Caco-2 (cell line): ENCODE measurements at regions of chr10 and their contacts with region 1.

Region 1: DNA sequence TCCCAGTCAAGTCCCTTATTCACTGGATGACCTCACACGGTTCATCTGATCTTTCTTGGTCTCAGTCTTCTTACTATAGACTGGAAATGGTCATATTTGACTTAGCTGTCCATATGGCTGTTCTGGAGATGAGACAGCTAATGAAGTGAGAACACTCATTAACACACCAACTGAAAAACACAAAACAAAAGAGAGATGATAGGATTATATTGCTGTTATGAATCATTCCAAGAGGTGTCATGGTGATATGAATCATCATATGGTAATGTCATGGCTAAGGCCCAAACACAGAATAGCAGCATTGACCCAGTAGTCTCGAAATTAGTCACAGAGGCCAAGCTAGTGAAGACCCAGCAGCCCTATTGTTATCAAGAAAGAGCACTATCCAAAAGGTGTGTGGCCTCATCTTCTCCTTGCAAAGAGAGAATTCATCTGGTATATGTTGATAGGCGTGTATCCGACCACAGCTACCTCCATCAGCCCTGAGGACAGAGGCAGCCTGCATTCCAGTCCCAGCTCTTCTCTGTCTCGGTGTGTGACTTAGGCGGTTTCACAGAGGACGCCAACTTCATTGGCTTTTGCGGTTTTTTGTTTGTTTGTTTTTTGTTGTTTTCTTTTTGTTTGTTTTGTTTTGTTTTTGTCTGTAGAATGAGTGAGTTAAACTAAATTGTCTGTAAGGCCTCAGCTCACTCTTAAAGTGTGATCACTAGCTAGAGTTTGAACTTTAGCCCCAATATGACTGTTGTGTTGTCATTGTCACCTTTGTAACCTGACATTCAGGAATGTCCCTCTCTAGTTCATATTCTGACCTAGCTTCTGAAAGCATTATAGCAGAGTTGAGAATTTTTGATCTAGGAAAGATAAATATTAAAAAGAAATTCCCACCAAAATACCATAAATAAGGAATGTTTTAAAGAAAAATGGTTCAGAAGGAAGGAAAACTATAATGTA is 97.4 kb upstream of the PDCD4 start:
- DNase-seq: peak in 1 of 2 experiments; percentile 35
- H3K4me3 ChIP-seq: no peak overlapping the region
- H3K4me3 Mint-ChIP-seq: peak overlapping the region; percentile 51
- H3K27ac Mint-ChIP-seq: peak overlapping the region; percentile 98
- H3K4me1 ChIP-seq: peaks cover 34% of the 10 kb centered on the region
- H3K4me1 Mint-ChIP-seq: peaks cover 21% of the 10 kb centered on the region
- H3K27me3 ChIP-seq: no peaks in the 10 kb centered on the region
- H3K27me3 Mint-ChIP-seq: no peaks in the 10 kb centered on the region
- CTCF ChIP-seq: no peak

Region 2: DNA sequence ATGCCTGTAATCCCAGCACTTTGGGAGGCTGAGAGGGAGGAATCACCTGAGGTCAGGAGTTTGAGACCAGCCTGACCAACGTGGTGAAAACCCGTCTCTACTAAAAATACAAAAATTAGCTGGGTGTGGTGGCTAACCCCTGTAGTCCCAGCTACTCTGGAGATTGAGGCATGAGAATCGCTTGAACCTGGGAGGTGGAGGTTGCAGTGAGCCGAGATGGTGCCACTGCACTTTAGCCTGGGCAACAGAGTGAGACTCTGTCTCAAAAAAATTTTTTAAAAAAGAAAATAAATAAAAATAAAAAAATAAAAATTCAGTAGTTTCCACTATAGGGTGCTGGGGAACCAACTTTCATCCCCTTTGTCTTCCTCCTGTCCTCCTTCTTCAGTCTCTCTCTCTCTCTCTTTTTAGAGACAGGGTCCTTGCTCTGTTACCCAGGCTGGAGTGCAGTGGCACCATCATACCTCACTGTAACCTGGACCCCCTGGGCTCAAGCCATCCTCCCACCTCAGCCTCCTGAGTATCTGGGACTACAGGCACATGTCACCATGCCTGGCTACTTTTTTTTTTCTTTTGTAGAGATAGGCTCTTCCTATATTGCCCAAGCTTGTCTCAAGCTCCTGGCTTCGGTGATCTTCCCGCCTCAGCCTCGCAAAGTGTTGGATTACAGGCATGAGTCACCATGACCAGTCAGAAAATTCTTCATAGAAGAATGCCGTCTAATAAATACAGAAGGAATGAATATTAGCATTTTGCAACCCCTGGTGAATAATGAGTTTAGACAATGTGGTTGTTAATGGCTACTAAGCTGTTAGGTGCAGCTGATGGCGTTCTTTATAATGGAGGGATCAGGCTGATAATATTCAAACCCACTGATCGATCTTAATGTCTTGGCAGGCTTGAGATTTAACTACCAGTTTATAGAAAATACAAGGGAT is 109.6 kb before region 1 on chr10:
- CTCF ChIA-PET with region 1: no interaction called
- POLR2A ChIA-PET with region 1: no interaction called
- intact Hi-C with region 1: no loop called
- DNase-seq: peak; percentile 46 to 47
- H3K4me3 ChIP-seq: no peak overlapping the region
- H3K4me3 Mint-ChIP-seq: no peak overlapping the region
- H3K27ac Mint-ChIP-seq: no peak overlapping the region
- H3K4me1 ChIP-seq: no peaks in the 10 kb centered on the region
- H3K4me1 Mint-ChIP-seq: no peaks in the 10 kb centered on the region
- H3K27me3 ChIP-seq: no peaks in the 10 kb centered on the region
- H3K27me3 Mint-ChIP-seq: peaks cover 3% of the 10 kb centered on the region
- CTCF ChIP-seq: no peak

Region 3: GRCh38 chr10:110794808-110795207 is 20.5 kb after region 1 on chr10:
- CTCF ChIA-PET with region 1: no interaction called
- POLR2A ChIA-PET with region 1: no interaction called
- intact Hi-C with region 1: loop called (anchors 1 kb)
- DNase-seq: no peak
- H3K4me3 ChIP-seq: no peak overlapping the region
- H3K4me3 Mint-ChIP-seq: no peak overlapping the region
- H3K27ac Mint-ChIP-seq: no peak overlapping the region
- H3K4me1 ChIP-seq: peaks cover 18% of the 10 kb centered on the region
- H3K4me1 Mint-ChIP-seq: peaks cover 10% of the 10 kb centered on the region
- H3K27me3 ChIP-seq: no peaks in the 10 kb centered on the region
- H3K27me3 Mint-ChIP-seq: no peaks in the 10 kb centered on the region
- CTCF ChIP-seq: no peak